Posterior cingulate gyrus (tissue), 11 donors: ENCODE measurements at regions of chr3 and their contacts with region 1.

Region 1: GRCh38 chr3:64030741-64031140 is 7.4 kb upstream of the PSMD6 start:
- DNase-seq: peak; percentile 46 to 95 (median 76)

Region 2: DNA sequence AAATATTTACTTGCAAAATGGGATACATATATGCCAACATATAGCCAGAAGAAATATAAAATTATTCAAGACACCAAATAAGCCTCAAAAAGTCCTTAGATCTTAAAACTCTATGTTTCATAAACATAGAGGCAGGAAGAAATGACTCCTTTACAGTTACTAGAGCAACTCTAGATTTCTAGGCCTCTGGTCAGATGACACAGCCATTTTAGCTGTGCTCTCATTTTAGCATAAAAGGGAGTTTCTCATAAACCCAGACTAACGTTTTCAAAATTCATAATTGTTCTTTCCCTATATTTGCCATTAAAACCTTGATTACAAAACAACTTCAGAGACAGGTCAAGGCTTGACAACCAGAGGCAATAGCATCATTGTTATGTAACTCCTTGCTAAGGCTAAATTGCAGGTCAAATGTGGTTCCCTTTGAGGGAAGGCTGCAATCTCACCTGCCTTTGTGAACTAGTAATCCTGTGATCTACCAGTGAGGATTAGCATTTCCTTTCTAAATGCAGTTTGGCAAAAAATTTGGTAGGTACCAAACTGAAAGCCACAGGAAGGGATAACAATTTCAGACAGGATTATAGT is 175.3 kb before region 1 on chr3:
- intact Hi-C with region 1: no loop called
- DNase-seq: no peak

Region 3: GRCh38 chr3:64224826-64225610 is 194.3 kb after region 1 on chr3 and contains the start of gene PRICKLE2:
- intact Hi-C with region 1: loop called (anchors 2 kb)
- DNase-seq: peak; percentile 66 to 97 (median 79)

Region 4: GRCh38 chr3:64399205-64399800 is 368.6 kb after region 1 on chr3:
- intact Hi-C with region 1: loop called (anchors 1 kb)
- DNase-seq: peak in 2 of 10 donors; percentile 21 to 27

Region 5: GRCh38 chr3:64484289-64484992 is 453.7 kb after region 1 on chr3:
- intact Hi-C with region 1: loop called (anchors 1 kb)
- DNase-seq: peak; percentile 67 to 98 (median 92)